CD8-positive, alpha-beta T cell (primary cell): ENCODE measurements at regions of chr2 and their contacts with region 1.

Region 1: DNA sequence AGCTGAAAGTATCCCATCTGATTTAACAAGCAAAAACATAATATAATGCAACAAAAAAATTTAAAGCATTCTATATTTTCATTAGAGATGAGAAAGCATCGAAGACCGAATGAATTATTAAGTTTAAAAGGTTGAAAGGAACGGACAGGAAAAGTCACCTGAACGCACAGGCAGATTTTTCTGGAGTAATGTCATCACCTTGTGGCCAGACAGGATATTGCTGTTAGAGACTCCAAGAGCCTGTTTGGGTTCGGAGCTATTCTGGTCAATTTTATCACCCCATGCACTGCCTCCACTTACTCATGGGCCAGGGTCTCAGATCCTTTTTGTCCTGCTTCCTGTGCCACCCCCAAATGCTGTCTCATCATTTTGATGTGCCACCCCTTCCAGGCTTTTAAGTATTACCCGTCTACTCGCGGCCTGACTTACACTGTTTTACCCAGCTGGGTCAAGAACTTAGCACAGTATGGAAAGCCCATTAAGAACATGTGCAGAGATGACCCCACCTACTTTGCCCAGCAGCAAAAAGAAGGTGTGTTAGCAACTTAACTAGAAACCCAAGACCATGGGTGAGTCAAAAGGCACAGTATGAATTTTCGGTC is 27.3 kb downstream of the GKN2 start:
- DNase-seq: peak; percentile 18 to 80 (median 56)
- ATAC-seq: peak; percentile 87
- H3K4me3 ChIP-seq: no peak overlapping the region
- H3K4me3 Mint-ChIP-seq: no peak overlapping the region
- H3K27ac ChIP-seq: no peak overlapping the region
- H3K27ac Mint-ChIP-seq: no peak overlapping the region
- H3K4me1 ChIP-seq: no peaks in the 10 kb centered on the region
- H3K4me1 Mint-ChIP-seq: no peaks in the 10 kb centered on the region
- H3K27me3 ChIP-seq: no peaks in the 10 kb centered on the region
- H3K27me3 Mint-ChIP-seq: peaks cover 2% of the 10 kb centered on the region
- CTCF ChIP-seq: peak; percentile 98

Region 2: GRCh38 chr2:68362069-68362468 is 563.3 kb before region 1 on chr2:
- CTCF ChIA-PET with region 1: interaction called, 7 read pairs
- POLR2A ChIA-PET with region 1: no interaction called
- intact Hi-C with region 1: loop called in 1 of 2 experiments (anchors 10 kb)
- DNase-seq: peak; percentile 67 to 92 (median 80)
- ATAC-seq: peak; percentile 90
- H3K4me3 ChIP-seq: peak overlapping the region; percentile 16 to 32
- H3K4me3 Mint-ChIP-seq: peak overlapping the region; percentile 69
- H3K27ac ChIP-seq: peak overlapping the region in 1 of 2 experiments; percentile 72
- H3K27ac Mint-ChIP-seq: peak overlapping the region; percentile 33
- H3K4me1 ChIP-seq: peaks cover 9% of the 10 kb centered on the region
- H3K4me1 Mint-ChIP-seq: peaks cover 25% of the 10 kb centered on the region
- H3K27me3 ChIP-seq: no peaks in the 10 kb centered on the region
- H3K27me3 Mint-ChIP-seq: no peaks in the 10 kb centered on the region
- CTCF ChIP-seq: peak; percentile 73

Region 3: GRCh38 chr2:68475110-68475509 is 450.3 kb before region 1 on chr2:
- CTCF ChIA-PET with region 1: interaction called, 12 read pairs
- POLR2A ChIA-PET with region 1: no interaction called
- intact Hi-C with region 1: no loop called
- DNase-seq: no peak
- ATAC-seq: no peak
- H3K4me3 ChIP-seq: no peak overlapping the region
- H3K4me3 Mint-ChIP-seq: no peak overlapping the region
- H3K27ac ChIP-seq: no peak overlapping the region
- H3K27ac Mint-ChIP-seq: no peak overlapping the region
- H3K4me1 ChIP-seq: no peaks in the 10 kb centered on the region
- H3K4me1 Mint-ChIP-seq: no peaks in the 10 kb centered on the region
- H3K27me3 ChIP-seq: no peaks in the 10 kb centered on the region
- H3K27me3 Mint-ChIP-seq: no peaks in the 10 kb centered on the region
- CTCF ChIP-seq: no peak

Region 4: GRCh38 chr2:68594674-68595492 is 330.5 kb before region 1 on chr2:
- CTCF ChIA-PET with region 1: interaction called, 36 read pairs
- POLR2A ChIA-PET with region 1: no interaction called
- intact Hi-C with region 1: loop called (anchors 1 to 5 kb)
- DNase-seq: peak; percentile 12 to 74 (median 54)
- ATAC-seq: peak; percentile 48
- H3K4me3 ChIP-seq: no peak overlapping the region
- H3K4me3 Mint-ChIP-seq: peak overlapping the region; percentile 17
- H3K27ac ChIP-seq: no peak overlapping the region
- H3K27ac Mint-ChIP-seq: no peak overlapping the region
- H3K4me1 ChIP-seq: no peaks in the 10 kb centered on the region
- H3K4me1 Mint-ChIP-seq: peaks cover 6% of the 10 kb centered on the region
- H3K27me3 ChIP-seq: no peaks in the 10 kb centered on the region
- H3K27me3 Mint-ChIP-seq: no peaks in the 10 kb centered on the region
- CTCF ChIP-seq: peak; percentile 96

Region 5: GRCh38 chr2:68742626-68743415 is 182.6 kb before region 1 on chr2:
- CTCF ChIA-PET with region 1: interaction called, 72 read pairs
- POLR2A ChIA-PET with region 1: no interaction called
- intact Hi-C with region 1: no loop called
- DNase-seq: peak in 3 of 9 experiments; percentile 3 to 35 (median 11)
- ATAC-seq: no peak
- H3K4me3 ChIP-seq: no peak overlapping the region
- H3K4me3 Mint-ChIP-seq: peak overlapping the region; percentile 17
- H3K27ac ChIP-seq: peak overlapping the region in 1 of 2 experiments; percentile 18
- H3K27ac Mint-ChIP-seq: peak overlapping the region; percentile 42
- H3K4me1 ChIP-seq: peaks cover 82% of the 10 kb centered on the region
- H3K4me1 Mint-ChIP-seq: peaks cover 90% of the 10 kb centered on the region
- H3K27me3 ChIP-seq: no peaks in the 10 kb centered on the region
- H3K27me3 Mint-ChIP-seq: no peaks in the 10 kb centered on the region
- CTCF ChIP-seq: no peak

Region 6: DNA sequence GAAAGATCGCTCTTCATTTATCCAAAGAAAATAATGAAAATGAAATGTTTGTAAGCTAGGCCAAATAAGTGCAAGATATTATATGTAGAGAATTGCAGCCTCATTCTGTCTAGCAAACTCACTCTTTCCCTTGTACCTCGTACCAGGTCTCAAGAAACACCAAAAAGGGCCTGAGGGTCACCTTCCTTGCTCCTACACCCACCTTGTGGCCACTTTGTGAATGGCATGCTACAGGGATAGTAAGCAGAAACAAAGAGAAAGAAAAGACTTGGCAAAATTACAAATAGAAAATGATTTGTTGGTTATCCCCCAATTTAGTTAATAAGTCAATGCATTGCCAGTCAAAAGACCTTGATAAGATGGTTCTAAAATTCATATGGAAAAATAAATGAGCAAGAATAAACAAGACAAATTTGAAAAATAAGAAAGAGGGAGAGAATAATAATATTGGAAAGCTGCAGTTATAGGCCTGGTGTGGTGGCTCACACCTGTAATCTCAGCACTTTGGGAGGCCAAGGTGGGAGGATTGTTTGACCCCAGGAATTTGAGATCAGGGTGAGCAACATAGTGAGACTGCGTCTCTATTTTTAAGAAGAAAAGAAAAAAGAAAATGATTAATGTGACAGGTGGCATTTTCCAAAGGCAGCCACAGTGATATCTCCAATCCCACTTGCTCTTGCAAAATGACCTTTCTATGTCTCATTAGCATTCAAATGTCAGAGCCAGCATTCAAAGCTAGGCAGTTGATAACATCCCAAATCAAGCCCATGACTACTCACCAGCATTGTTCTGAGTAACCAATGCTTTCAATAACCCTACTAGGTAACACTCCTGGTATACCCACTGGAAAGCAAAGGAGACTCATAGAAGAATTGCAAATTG is 15.4 kb before region 1 on chr2:
- CTCF ChIA-PET with region 1: interaction called, 30 read pairs
- POLR2A ChIA-PET with region 1: no interaction called
- intact Hi-C with region 1: loop called in 1 of 2 experiments (anchors 1 kb)
- DNase-seq: peak; percentile 36 to 82 (median 70)
- ATAC-seq: peak; percentile 21
- H3K4me3 ChIP-seq: no peak overlapping the region
- H3K4me3 Mint-ChIP-seq: no peak overlapping the region
- H3K27ac ChIP-seq: no peak overlapping the region
- H3K27ac Mint-ChIP-seq: peak overlapping the region; percentile 42
- H3K4me1 ChIP-seq: peaks cover 34% of the 10 kb centered on the region
- H3K4me1 Mint-ChIP-seq: peaks cover 34% of the 10 kb centered on the region
- H3K27me3 ChIP-seq: no peaks in the 10 kb centered on the region
- H3K27me3 Mint-ChIP-seq: no peaks in the 10 kb centered on the region
- CTCF ChIP-seq: peak; percentile 98

Region 7: GRCh38 chr2:68943581-68944568 is 18.5 kb after region 1 on chr2:
- CTCF ChIA-PET with region 1: interaction called, 15 read pairs
- POLR2A ChIA-PET with region 1: interaction called, 3 read pairs
- intact Hi-C with region 1: no loop called
- DNase-seq: peak; percentile 18 to 72 (median 53)
- ATAC-seq: peak; percentile 75
- H3K4me3 ChIP-seq: no peak overlapping the region
- H3K4me3 Mint-ChIP-seq: no peak overlapping the region
- H3K27ac ChIP-seq: no peak overlapping the region
- H3K27ac Mint-ChIP-seq: no peak overlapping the region
- H3K4me1 ChIP-seq: no peaks in the 10 kb centered on the region
- H3K4me1 Mint-ChIP-seq: peaks cover 4% of the 10 kb centered on the region
- H3K27me3 ChIP-seq: peaks cover 0 to 13% of the 10 kb centered on the region in 2 experiments
- H3K27me3 Mint-ChIP-seq: peaks cover 27% of the 10 kb centered on the region
- CTCF ChIP-seq: peak; percentile 84

Region 8: GRCh38 chr2:68971591-68972231 is 46.3 kb after region 1 on chr2:
- CTCF ChIA-PET with region 1: no interaction called
- POLR2A ChIA-PET with region 1: no interaction called
- intact Hi-C with region 1: no loop called
- DNase-seq: no peak
- ATAC-seq: no peak
- H3K4me3 ChIP-seq: no peak overlapping the region
- H3K4me3 Mint-ChIP-seq: no peak overlapping the region
- H3K27ac ChIP-seq: no peak overlapping the region
- H3K27ac Mint-ChIP-seq: no peak overlapping the region
- H3K4me1 ChIP-seq: no peaks in the 10 kb centered on the region
- H3K4me1 Mint-ChIP-seq: no peaks in the 10 kb centered on the region
- H3K27me3 ChIP-seq: no peaks in the 10 kb centered on the region
- H3K27me3 Mint-ChIP-seq: peaks cover 10% of the 10 kb centered on the region
- CTCF ChIP-seq: no peak